Heart right ventricle (tissue), 16 donors: ENCODE measurements at regions of chr1 and their contacts with region 1.

Region 1: DNA sequence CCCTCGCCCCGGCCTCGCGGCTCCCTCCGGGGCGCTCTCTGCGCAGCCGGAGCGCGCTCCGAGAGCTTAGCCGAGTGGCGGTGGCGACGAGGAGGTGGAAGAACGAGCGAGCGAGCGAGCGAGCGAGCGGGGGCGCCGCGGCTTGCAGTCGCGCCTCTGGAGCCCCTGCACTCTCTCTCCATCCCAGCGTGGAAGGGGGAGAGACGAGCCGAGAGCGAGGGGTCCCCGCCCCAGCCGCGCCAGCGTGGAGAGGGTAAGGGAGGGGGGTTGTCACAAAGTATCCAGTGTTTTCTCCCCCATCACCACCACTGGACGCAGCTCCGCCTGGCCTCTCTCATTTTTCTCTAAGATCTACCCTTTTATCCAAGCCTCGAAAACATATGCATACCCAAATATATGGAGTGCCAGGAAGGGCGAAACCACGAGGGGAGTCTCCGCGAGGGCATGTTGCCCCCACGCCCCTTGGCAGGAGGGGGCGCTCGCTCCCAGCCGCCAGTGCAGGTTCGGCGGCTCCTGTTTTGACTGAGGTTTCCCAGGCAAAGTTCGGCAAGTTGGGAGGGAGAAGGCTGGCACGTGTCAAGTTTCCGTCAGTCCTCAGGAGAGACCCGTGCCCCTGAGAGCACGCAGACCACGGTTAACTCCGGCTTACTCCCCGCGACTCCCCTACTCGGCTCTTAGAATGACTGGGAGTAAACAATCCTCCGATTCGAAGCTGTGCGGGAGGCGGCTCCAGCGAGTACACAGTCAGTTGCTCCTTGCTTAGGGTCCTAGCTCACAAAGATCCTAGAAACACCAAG is 569 bp upstream of the DAB1 start:
- DNase-seq: peak; percentile 27 to 53
- ATAC-seq: peak in 7 of 8 donors; percentile 69 to 80 (median 72)
- H3K4me3 ChIP-seq: peak overlapping the region; percentile 37 to 64 (median 53)
- H3K27ac ChIP-seq: peak overlapping the region in 6 of 10 donors; percentile 25 to 77 (median 52)
- H3K4me1 ChIP-seq: peaks cover 0 to 23% (median 10%) of the 10 kb centered on the region in 9 donors
- H3K27me3 ChIP-seq: peaks cover 0 to 68% (median 54%) of the 10 kb centered on the region in 7 donors
- CTCF ChIP-seq: peak; percentile 24 to 78 (median 66)

Region 2: DNA sequence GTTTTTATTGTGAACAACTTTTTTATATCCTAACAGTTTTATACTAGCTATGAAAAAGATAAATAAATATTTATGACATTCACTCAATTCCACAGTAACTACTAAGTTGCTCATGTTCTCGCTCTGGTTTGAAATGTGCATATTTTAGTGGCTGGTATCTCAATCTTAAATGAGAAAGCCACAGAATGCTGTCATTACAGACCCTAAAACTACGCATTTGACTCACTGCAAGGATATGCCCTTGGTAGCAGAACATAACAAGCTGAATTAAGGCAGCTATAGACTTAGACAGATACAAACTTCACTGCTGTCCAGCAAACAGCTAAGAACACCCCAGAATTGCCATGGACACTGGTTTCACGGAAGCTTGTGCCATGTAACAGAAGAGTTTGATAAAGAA is 19.5 kb before region 1 on chr1:
- intact Hi-C with region 1: no loop called
- DNase-seq: no peak
- ATAC-seq: no peak
- H3K4me3 ChIP-seq: no peak overlapping the region
- H3K27ac ChIP-seq: no peak overlapping the region
- H3K4me1 ChIP-seq: peaks cover 0 to 9% (median 0%) of the 10 kb centered on the region in 9 donors
- H3K27me3 ChIP-seq: no peaks in the 10 kb centered on the region
- CTCF ChIP-seq: no peak

Region 3: GRCh38 chr1:57711326-57711725 is 286.9 kb after region 1 on chr1:
- intact Hi-C with region 1: no loop called
- DNase-seq: no peak
- ATAC-seq: peak in 1 of 8 donors; percentile 31
- H3K4me3 ChIP-seq: no peak overlapping the region
- H3K27ac ChIP-seq: no peak overlapping the region
- H3K4me1 ChIP-seq: peaks cover 0 to 6% (median 0%) of the 10 kb centered on the region in 9 donors
- H3K27me3 ChIP-seq: no peaks in the 10 kb centered on the region
- CTCF ChIP-seq: no peak

Region 4: GRCh38 chr1:57727121-57727520 is 302.7 kb after region 1 on chr1:
- intact Hi-C with region 1: loop called in 1 of 10 experiments (anchors 10 kb)
- DNase-seq: no peak
- ATAC-seq: no peak
- H3K4me3 ChIP-seq: no peak overlapping the region
- H3K27ac ChIP-seq: no peak overlapping the region
- H3K4me1 ChIP-seq: peaks cover 0 to 15% (median 0%) of the 10 kb centered on the region in 9 donors
- H3K27me3 ChIP-seq: no peaks in the 10 kb centered on the region
- CTCF ChIP-seq: no peak

Region 5: GRCh38 chr1:58047265-58047858 is 622.9 kb after region 1 on chr1:
- intact Hi-C with region 1: loop called in 4 of 10 experiments (anchors 10 kb)
- DNase-seq: peak; percentile 9 to 27
- ATAC-seq: peak in 2 of 8 donors; percentile 50 to 53
- H3K4me3 ChIP-seq: no peak overlapping the region
- H3K27ac ChIP-seq: no peak overlapping the region
- H3K4me1 ChIP-seq: no peaks in the 10 kb centered on the region
- H3K27me3 ChIP-seq: no peaks in the 10 kb centered on the region
- CTCF ChIP-seq: peak; percentile 22 to 76 (median 68)

Region 6: GRCh38 chr1:58155418-58156123 is 731.1 kb after region 1 on chr1:
- intact Hi-C with region 1: loop called in 4 of 10 experiments (anchors 5 to 10 kb)
- DNase-seq: peak; percentile 11 to 44
- ATAC-seq: peak; percentile 67 to 98 (median 93)
- H3K4me3 ChIP-seq: no peak overlapping the region
- H3K27ac ChIP-seq: peak overlapping the region in 4 of 10 donors; percentile 20 to 49 (median 32)
- H3K4me1 ChIP-seq: peaks cover 0 to 23% (median 0%) of the 10 kb centered on the region in 9 donors
- H3K27me3 ChIP-seq: no peaks in the 10 kb centered on the region
- CTCF ChIP-seq: peak; percentile 23 to 68 (median 58)